GM10248 (cell line): ENCODE measurements at regions of chr16 and their contacts with region 1.

Region 1: GRCh38 chr16:66728117-66728787 is 23.2 kb downstream of the DYNC1LI2 start:
- DNase-seq: peak; percentile 67
- CTCF ChIP-seq: peak; percentile 58

Region 2: DNA sequence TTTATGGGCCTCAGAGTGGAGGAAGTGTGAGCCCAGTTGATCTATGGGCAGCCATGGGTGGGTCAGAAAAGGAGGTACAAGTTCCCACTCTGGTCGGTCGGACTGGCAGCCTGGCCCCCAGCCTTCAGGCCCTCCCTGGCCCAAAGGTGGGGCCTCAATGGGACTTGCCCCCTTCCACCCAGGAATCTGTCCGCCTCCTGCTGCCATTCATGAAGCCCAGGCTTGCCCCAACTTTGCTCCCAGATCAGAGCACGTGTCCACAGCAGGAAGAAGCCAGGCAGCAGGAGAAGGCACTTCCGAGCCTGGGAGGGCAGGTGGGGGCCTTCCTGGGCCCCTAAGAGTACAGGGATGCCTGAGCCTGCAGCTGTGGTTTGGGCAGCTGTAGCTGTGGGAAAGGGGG is 126.8 kb before region 1 on chr16:
- CTCF ChIA-PET with region 1: no interaction called
- POLR2A ChIA-PET with region 1: no interaction called
- DNase-seq: no peak
- CTCF ChIP-seq: no peak

Region 3: DNA sequence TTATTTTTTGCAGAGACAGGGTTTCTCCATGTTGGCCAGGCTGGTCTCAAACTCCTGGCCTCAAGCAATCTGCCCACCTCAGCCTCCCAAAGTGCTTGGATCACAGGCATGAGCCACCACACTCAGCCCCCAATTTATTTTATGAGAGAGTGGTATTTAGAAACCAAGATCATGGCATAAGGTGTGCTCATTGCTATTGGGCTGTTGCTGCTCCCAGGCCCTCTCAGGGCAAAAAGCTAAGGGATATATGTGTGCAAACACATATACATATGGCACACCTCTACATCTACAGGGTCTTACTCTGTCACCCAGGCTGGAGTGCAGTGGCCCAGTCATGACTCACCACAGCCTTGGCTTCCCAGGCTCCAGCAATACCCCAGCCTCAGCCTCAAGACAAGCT is 16.7 kb before region 1 on chr16:
- CTCF ChIA-PET with region 1: interaction called, 13 read pairs
- POLR2A ChIA-PET with region 1: no interaction called
- DNase-seq: no peak
- CTCF ChIP-seq: no peak

Region 4: DNA sequence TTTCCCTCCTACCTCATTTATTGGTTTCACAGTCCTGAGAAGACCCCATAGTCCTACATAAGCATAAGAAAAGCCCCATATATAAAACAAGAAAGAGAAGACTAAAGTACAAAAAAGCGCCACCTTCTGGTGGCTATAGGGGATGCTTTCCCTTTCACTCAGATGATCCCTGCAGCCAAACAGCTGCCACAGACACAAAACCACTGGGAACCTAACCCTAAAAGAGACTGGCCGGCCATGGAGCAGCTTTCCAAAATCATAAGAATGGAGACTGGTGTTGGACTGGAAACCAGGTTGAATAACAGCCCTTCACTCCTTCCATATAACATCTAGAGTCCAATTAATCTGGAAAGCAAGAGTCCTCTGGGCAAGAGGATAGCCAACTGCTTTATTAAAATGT is 11.8 kb after region 1 on chr16:
- CTCF ChIA-PET with region 1: interaction called, 64 read pairs
- POLR2A ChIA-PET with region 1: interaction called, 3 read pairs
- DNase-seq: peak; percentile 64
- CTCF ChIP-seq: no peak